ENCODE measurements at regions of chr3 and their contacts with region 1.

Region 1: DNA sequence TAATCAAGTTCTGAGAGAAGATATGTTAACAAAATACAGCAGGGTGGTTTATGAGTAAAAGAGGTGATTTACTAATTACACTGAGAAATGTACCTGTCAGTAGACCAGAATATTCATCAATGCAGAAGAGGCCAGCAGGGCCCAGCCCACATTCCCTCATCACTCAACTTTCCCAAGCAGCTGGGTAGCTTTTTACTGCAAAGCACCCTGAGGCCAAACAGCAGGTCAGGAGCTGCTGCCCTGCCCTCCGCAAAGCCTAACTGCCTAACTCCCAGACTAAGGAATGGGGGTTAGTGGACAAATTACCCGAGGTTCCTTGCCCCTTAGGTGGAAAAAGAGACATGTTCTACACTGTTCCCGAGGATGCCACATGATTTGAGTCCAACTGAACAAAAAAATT is 108.2 kb downstream of the TBL1XR1 start:
- DNase-seq: no peak
- ATAC-seq: no peak
- H3K4me3 ChIP-seq: no peak overlapping the region
- H3K4me3 Mint-ChIP-seq: no peak overlapping the region
- H3K27ac ChIP-seq: no peak overlapping the region
- H3K27ac Mint-ChIP-seq: no peak overlapping the region
- H3K4me1 ChIP-seq: peaks cover 7 to 11% of the 10 kb centered on the region in 2 experiments
- H3K4me1 Mint-ChIP-seq: peaks cover 81 to 83% (median 82%) of the 10 kb centered on the region in 3 donors
- H3K27me3 ChIP-seq: no peaks in the 10 kb centered on the region
- H3K27me3 Mint-ChIP-seq: no peaks in the 10 kb centered on the region

Region 2: DNA sequence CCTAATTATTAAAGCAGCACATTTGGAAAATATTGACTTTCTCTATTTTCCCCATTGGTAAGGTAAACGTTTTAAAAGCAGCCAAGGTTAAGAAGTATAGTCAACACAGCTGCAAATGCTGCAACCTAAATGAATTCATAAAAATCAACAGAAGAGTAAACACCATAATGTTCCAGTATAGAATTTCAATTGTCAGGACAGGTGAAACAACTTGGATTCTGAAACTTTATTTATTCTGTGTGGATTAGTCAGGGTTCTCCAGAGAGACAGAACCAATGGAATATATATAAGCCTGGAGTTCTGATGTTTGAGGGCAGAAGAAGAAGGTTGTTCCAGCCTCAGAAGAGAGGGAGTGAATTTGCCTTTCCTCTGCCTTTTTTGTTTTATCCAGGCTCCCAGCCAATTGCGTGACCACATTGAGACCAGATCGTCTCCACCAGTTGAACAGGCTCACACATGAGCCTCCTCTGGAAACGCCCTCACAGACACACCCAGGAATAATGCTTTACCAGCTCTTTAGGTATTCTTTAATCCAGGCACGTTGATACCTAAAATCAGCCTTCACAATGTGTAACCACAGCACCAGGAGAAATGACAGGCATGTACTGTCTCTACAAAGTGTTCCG is 815.1 kb before region 1 on chr3:
- CTCF ChIA-PET with region 1: no interaction called
- POLR2A ChIA-PET with region 1: no interaction called
- DNase-seq: no peak
- ATAC-seq: no peak
- H3K4me3 ChIP-seq: no peak overlapping the region
- H3K4me3 Mint-ChIP-seq: no peak overlapping the region
- H3K27ac ChIP-seq: no peak overlapping the region
- H3K27ac Mint-ChIP-seq: no peak overlapping the region
- H3K4me1 ChIP-seq: no peaks in the 10 kb centered on the region
- H3K4me1 Mint-ChIP-seq: no peaks in the 10 kb centered on the region
- H3K27me3 ChIP-seq: no peaks in the 10 kb centered on the region
- H3K27me3 Mint-ChIP-seq: no peaks in the 10 kb centered on the region

Region 3: DNA sequence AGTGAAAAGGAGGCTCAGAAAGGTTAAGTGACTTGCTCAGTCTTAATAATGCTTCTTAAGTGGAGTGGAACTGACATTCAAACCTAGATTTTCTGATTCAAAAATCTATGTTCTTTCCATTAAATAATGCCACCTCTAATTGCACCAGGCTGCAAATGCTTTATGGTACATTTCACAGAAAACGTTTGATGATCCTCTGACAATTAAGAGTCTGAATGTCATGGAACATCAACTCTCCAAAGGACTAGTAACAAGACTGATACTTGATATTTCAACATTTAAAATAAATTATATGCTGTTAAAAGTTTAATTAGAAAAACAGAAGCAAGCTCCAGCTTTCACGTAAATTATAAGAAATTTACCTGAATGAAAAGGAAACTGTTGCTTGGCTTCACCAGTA is 43.3 kb before region 1 on chr3:
- CTCF ChIA-PET with region 1: no interaction called
- POLR2A ChIA-PET with region 1: no interaction called
- DNase-seq: no peak
- ATAC-seq: no peak
- H3K4me3 ChIP-seq: no peak overlapping the region
- H3K4me3 Mint-ChIP-seq: no peak overlapping the region
- H3K27ac ChIP-seq: no peak overlapping the region
- H3K27ac Mint-ChIP-seq: no peak overlapping the region
- H3K4me1 ChIP-seq: peaks cover 0 to 9% of the 10 kb centered on the region in 2 experiments
- H3K4me1 Mint-ChIP-seq: peaks cover 21 to 31% (median 23%) of the 10 kb centered on the region in 3 donors
- H3K27me3 ChIP-seq: no peaks in the 10 kb centered on the region
- H3K27me3 Mint-ChIP-seq: no peaks in the 10 kb centered on the region

Region 4: DNA sequence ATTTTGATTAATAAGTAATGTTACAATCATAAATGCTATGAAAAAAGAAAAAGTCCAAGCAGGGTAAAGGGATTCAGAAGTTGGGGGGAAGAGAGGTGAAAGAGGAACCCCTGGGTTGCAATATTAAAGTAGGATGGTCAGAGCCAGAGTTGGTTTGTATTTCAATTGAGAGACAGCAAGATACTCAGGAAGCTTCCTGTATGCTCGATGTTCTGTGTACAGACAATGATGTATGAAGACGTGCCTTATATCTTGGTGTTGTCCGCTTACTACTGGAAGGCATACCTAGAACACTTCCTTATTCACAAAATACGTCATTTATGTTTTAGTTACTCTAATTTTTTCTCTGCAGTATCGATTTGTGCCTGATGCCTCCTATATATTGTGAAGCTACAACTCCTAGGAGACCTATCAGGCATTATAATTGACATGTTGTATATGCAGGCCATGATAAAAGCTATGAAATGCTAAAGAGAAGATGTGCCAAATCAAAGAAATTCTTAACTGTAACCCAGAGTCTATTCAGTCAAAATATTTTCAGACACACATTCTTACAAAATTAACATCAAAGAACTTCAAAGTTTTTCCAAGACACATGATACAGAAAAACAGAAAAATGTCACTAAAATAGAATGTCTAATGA is 20.7 kb after region 1 on chr3:
- CTCF ChIA-PET with region 1: no interaction called
- POLR2A ChIA-PET with region 1: interaction called in 1 of 2 experiments, 11 read pairs
- DNase-seq: peak in 7 of 35 experiments; percentile 5 to 62 (median 15)
- ATAC-seq: peak; percentile 66 to 96 (median 74)
- H3K4me3 ChIP-seq: no peak overlapping the region
- H3K4me3 Mint-ChIP-seq: peak overlapping the region; percentile 22 to 51 (median 40)
- H3K27ac ChIP-seq: peak overlapping the region; percentile 46
- H3K27ac Mint-ChIP-seq: peak overlapping the region; percentile 83 to 87
- H3K4me1 ChIP-seq: peaks cover 21 to 42% of the 10 kb centered on the region in 2 experiments
- H3K4me1 Mint-ChIP-seq: peaks cover 78 to 82% (median 81%) of the 10 kb centered on the region in 3 donors
- H3K27me3 ChIP-seq: no peaks in the 10 kb centered on the region
- H3K27me3 Mint-ChIP-seq: no peaks in the 10 kb centered on the region